H1 (cell line): ENCODE measurements at regions of chr5 and their contacts with region 1.

Region 1: GRCh38 chr5:54215233-54215736 is 95.1 kb downstream of the ARL15 start:
- DNase-seq: no peak
- H3K4me3 ChIP-seq: peak overlapping the region in 1 of 4 experiments; percentile 40; a peak in 4 of 8 replicates
- H3K27ac ChIP-seq: no peak overlapping the region
- H3K4me1 ChIP-seq: peaks cover 2 to 23% (median 16%) of the 10 kb centered on the region in 4 experiments; a peak in 6 of 7 replicates
- H3K27me3 ChIP-seq: no peaks in the 10 kb centered on the region
- CTCF ChIP-seq: no peak
- EP300 ChIP-seq: no peak
- POLR2A ChIP-seq: no peak
- RAD21 ChIP-seq: no peak

Region 2: DNA sequence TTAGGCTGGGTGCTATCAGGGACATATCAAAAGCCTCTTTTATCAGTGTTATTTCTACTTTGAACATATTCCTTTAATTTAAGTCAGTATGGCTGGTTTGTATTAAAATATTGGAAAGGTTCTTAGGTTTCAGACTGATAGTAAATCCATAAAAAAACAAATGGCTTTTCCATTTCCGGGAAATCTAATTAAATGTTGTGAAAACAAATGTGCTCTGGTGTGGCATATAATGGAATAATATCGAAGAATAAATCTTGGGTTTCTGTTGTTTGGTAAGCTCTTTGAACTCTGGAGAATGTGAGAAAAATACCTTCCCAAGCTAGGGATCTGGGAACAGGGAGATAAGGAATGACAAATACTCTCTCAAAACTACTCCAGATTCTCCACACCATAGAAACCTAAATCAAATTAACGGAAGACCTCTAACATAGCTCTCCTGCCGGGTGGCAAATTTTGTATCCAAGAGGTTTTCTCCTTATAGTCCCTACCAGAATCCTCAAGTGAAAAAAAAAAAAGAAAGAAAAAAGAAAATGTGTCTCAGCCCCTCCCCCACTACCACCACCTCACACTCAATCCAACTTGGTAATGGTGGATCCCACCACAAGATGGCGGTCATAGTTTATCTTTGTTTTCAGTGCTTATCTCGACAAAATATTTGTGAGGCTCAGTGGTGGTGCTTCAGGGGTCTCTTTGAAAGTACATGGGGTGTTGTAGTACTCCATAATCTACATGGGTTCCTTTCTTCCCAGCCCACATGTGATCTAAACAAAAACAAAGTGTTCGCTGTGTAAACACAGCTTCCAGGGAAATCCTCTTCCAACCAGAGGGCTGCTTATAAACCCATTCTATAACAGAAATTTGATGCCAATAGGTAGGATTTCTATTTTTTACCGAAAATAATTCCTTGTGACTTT is 789.4 kb before region 1 on chr5:
- CTCF ChIA-PET with region 1: interaction called, 10 read pairs
- POLR2A ChIA-PET with region 1: no interaction called
- DNase-seq: peak; percentile 10 to 82
- H3K4me3 ChIP-seq: no peak overlapping the region
- H3K27ac ChIP-seq: no peak overlapping the region
- H3K4me1 ChIP-seq: peaks cover 0 to 3% (median 0%) of the 10 kb centered on the region in 4 experiments; a peak in 1 of 7 replicates
- H3K27me3 ChIP-seq: no peaks in the 10 kb centered on the region
- CTCF ChIP-seq: peak; percentile 53 to 67 (median 66)
- EP300 ChIP-seq: no peak
- POLR2A ChIP-seq: no peak
- RAD21 ChIP-seq: peak; percentile 87 to 88

Region 3: GRCh38 chr5:54176066-54176830 is 39.0 kb before region 1 on chr5:
- CTCF ChIA-PET with region 1: no interaction called
- POLR2A ChIA-PET with region 1: no interaction called
- DNase-seq: no peak
- H3K4me3 ChIP-seq: no peak overlapping the region
- H3K27ac ChIP-seq: no peak overlapping the region
- H3K4me1 ChIP-seq: peaks cover 0 to 5% (median 1%) of the 10 kb centered on the region in 4 experiments; a peak in 2 of 7 replicates
- H3K27me3 ChIP-seq: no peaks in the 10 kb centered on the region
- CTCF ChIP-seq: no peak
- EP300 ChIP-seq: no peak
- POLR2A ChIP-seq: no peak
- RAD21 ChIP-seq: no peak

Region 4: DNA sequence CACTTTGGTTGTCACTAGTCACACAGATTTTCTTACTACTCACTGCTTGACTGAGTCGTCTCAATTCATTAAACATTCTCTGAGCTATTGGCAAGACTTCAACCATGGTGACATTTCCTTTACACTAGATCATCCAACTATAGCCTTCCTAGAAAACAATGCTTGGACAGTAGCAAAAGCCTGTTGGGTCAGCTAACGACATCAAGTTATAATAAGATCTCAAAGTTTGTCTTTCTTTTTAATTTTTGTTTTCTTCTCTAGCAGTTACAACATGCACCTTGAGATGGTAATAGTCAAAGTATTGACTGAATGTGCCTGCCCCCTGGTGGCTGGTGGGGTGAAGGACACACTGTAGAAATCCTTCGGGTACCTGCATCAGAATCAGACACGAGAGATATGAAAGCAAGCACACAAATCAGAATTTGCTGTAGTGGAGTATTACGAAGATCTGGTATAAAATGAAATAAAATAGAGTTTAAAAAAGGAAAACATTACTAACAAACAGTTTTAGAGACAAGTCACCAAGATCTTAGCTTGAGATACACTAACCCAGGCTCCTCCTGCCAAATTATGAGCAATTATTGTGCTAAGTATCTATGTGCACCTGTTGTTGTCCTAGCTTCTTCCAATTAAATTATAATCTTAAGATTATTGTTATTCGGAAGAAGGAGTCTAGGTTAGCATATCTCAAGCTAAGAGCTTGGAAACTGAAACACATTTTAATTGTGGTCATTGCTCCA is 13.9 kb after region 1 on chr5:
- CTCF ChIA-PET with region 1: interaction called, 10 read pairs
- POLR2A ChIA-PET with region 1: no interaction called
- DNase-seq: peak in 1 of 2 experiments; percentile 86
- H3K4me3 ChIP-seq: no peak overlapping the region
- H3K27ac ChIP-seq: no peak overlapping the region
- H3K4me1 ChIP-seq: no peaks in the 10 kb centered on the region
- H3K27me3 ChIP-seq: no peaks in the 10 kb centered on the region
- CTCF ChIP-seq: peak; percentile 71 to 80 (median 79)
- EP300 ChIP-seq: no peak
- POLR2A ChIP-seq: no peak
- RAD21 ChIP-seq: peak; percentile 80